Ascending aorta (tissue), 2 donors: ENCODE measurements at regions of chr12 and their contacts with region 1.

Region 1: GRCh38 chr12:122793685-122794106 is 19.3 kb downstream of the CCDC62 start:
- DNase-seq: no peak
- H3K4me3 ChIP-seq: no peak overlapping the region
- H3K27ac ChIP-seq: no peak overlapping the region
- H3K4me1 ChIP-seq: no peaks in the 10 kb centered on the region
- H3K27me3 ChIP-seq: no peaks in the 10 kb centered on the region
- CTCF ChIP-seq: peak; percentile 64 to 74 (median 67)

Region 2: DNA sequence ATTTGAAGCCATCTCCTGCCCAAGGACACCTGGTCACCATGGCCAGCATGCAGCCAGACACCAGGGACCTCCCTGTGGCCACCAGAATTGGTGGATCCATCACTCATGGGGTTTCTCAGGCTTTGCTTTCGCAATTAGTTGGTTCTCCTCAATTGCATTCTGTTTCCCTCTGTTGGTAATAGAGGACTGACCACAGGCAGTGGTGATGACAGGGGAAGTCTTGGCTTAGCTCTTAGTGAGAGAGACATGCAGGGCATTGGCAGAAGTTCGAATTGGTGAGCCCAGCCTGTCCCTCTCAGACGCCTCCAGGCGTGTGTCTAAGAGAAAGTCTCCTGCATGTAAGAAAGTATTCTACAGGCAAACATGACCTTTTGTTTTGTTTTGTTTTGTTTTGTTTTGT is 111.9 kb before region 1 on chr12:
- intact Hi-C with region 1: no loop called
- DNase-seq: no peak
- H3K4me3 ChIP-seq: no peak overlapping the region
- H3K27ac ChIP-seq: no peak overlapping the region
- H3K4me1 ChIP-seq: no peaks in the 10 kb centered on the region
- H3K27me3 ChIP-seq: no peaks in the 10 kb centered on the region
- CTCF ChIP-seq: no peak

Region 3: DNA sequence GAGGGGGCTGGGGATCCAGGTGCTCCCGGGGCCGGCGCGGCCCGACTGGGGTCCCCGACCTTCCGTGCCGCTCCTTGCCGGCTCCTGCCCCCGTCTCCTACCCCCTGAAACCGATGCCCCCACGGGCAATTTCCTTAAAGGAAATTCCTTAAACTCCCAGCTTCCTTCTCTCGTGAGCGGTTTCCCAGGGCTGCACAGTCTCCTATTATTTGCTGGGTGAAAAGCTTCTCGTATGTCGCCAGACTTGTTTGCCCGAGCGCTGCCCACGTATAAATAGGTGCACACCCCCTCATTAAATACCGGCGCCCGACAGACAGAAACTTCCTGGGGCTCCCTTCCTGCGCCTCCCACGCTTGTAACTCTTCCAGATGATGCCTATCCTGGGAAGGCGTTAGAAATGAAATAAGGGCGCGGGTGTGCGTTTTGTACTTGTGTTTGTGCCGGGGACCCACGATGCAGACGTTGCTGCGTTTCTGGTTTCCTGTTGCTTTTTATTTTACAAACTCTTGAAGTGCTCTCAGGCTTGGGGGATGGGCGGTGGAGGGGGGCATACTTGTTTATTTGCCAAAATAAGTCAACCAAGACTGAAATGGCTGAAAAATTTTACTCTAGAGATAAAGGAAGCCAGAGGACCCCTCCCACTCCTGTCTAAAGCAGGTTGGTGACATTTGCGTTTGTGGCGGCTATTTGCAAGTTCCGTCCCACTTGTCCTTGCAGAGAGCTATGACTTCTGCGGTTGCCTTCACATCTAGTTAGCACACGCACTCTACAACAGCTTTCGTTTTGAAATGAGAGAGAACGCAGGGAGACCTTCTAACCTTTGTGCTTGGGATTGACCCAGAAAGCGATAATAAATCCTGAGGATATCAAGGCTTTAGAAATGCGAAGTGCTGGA is 42.6 kb after region 1 on chr12:
- intact Hi-C with region 1: loop called (anchors 5 kb)
- DNase-seq: no peak
- H3K4me3 ChIP-seq: peak overlapping the region; percentile 68 to 75
- H3K27ac ChIP-seq: peak overlapping the region; percentile 59 to 60
- H3K4me1 ChIP-seq: peaks cover 2 to 13% of the 10 kb centered on the region in 2 donors
- H3K27me3 ChIP-seq: no peaks in the 10 kb centered on the region
- CTCF ChIP-seq: no peak

Region 4: DNA sequence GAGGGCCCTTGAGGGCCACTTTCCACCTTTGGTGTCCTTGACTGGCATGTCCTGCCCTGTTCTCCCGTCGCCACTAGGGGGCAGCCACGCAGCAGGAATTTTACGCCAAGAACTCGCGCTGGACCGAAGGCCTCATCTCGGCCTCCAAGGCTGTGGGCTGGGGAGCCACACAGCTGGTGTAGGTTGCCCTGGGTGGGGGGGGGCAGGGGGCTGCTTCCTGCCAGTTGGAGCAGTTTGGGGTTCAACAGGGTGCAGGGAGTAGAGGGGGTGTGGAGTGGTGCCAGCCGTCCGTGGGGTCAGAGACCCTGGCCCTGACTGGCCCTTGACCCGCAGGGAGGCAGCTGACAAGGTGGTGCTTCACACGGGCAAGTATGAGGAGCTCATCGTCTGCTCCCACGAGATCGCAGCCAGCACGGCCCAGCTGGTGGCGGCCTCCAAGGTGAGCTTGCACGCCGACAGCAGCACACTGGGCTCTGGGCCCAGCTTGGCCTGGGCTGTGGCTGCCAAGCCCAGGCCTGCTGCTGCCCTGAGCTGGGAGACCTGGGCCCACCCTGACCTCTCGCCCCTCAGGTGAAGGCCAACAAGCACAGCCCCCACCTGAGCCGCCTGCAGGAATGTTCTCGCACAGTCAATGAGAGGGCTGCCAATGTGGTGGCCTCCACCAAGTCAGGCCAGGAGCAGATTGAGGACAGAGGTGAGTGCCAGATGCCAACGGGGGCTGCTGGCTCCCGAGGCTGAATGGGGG is 66.8 kb after region 1 on chr12:
- intact Hi-C with region 1: loop called (anchors 2 kb)
- DNase-seq: peak in 1 of 2 donors; percentile 89
- H3K4me3 ChIP-seq: no peak overlapping the region
- H3K27ac ChIP-seq: peak overlapping the region; percentile 57 to 58
- H3K4me1 ChIP-seq: peaks cover 5% of the 10 kb centered on the region in 2 donors
- H3K27me3 ChIP-seq: no peaks in the 10 kb centered on the region
- CTCF ChIP-seq: peak; percentile 92 to 95 (median 94)

Region 5: DNA sequence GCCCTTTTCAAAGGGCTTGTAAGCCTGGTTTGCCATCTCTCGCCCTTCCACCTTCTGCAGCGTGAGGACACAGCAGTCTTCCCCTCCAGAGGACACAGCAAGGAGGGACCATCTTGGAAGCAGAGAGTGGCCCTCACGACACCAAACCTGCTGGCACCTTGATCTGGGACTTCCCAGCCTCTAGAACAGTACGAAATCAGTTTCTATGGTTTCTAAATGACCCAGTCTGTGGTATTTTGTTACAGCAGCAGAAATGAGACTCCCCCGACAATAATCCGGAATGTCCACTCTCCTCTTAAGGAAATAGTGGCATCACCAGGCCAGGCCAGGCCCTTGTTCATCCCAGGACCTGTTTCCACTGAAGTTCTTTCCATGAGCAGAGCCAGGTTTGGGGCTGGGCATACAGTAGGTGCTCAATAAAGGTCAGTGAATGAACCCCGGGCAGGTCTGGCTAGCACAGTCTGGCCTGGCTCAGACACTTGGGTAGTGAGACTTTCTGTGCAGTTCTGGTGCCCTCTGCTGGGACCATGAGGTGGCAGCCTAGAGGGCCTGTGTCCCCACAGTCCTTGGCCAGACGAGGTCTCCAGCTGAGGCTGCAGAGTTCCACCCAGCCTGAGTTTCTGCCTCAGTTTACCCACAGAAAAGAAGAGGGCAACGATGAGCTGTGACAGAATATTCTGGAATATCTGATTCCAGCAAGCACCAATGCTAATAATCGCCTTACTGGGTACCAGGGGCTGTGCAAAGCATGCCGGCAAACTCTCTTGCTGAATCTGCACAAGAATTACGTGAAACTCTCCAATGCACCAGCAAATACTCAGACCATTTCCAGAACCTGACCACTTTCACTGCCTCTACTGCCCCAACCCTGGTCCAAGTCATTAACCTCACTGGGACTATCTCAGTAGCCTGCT is 158.5 kb after region 1 on chr12:
- intact Hi-C with region 1: loop called (anchors 1 kb)
- DNase-seq: peak in 1 of 2 donors; percentile 87
- H3K4me3 ChIP-seq: no peak overlapping the region
- H3K27ac ChIP-seq: no peak overlapping the region
- H3K4me1 ChIP-seq: peaks cover 0 to 3% of the 10 kb centered on the region in 2 donors
- H3K27me3 ChIP-seq: no peaks in the 10 kb centered on the region
- CTCF ChIP-seq: peak; percentile 83 to 93 (median 89)

Region 6: GRCh38 chr12:123868791-123869190 is 1075.1 kb after region 1 on chr12:
- intact Hi-C with region 1: no loop called
- DNase-seq: no peak
- H3K4me3 ChIP-seq: no peak overlapping the region
- H3K27ac ChIP-seq: no peak overlapping the region
- H3K4me1 ChIP-seq: no peaks in the 10 kb centered on the region
- H3K27me3 ChIP-seq: no peaks in the 10 kb centered on the region
- CTCF ChIP-seq: no peak